ENCODE measurements at regions of chr11 and their contacts with region 1.

Region 1: GRCh38 chr11:102451681-102452460 is 694 bp downstream of the TMEM123 start:
- DNase-seq: peak; percentile 94
- H3K4me3 Mint-ChIP-seq: peak overlapping the region; percentile 95
- H3K27ac Mint-ChIP-seq: peak overlapping the region; percentile 99
- H3K4me1 Mint-ChIP-seq: peaks cover 70% of the 10 kb centered on the region
- H3K27me3 Mint-ChIP-seq: no peaks in the 10 kb centered on the region

Region 2: GRCh38 chr11:101765945-101766344 is 685.9 kb before region 1 on chr11:
- intact Hi-C with region 1: no loop called
- DNase-seq: no peak
- H3K4me3 Mint-ChIP-seq: no peak overlapping the region
- H3K27ac Mint-ChIP-seq: no peak overlapping the region
- H3K4me1 Mint-ChIP-seq: no peaks in the 10 kb centered on the region
- H3K27me3 Mint-ChIP-seq: no peaks in the 10 kb centered on the region

Region 3: DNA sequence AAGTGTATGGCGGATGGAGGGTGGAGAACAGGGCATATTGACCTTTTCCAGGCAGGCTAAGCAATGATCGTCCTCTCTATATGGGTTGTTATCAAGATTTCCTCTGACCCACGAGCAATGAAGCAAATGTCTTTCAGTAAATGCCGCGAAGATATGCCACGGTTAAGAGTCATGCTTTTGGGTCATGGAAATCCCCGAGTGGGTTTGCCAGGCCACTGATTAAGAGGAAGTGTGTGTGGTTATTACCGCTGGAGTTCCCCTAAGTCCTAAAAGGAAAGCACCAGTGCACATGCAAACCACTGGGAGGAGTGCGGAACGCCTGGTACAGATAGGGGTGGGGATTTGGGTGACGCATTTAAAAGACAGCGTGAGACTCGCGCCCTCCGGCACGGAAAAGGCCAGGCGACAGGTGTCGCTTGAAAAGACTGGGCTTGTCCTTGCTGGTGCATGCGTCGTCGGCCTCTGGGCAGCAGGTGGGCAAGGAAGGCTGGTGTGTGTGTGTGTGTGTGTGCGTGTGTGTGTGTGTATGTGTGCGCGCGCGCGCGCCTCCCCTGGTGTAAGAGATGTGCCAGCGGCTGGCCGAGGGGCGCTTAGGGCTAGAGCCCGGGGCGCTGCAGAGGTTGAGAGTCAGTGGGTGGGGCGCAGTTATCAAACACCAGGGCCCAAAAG is 134.6 kb before region 1 on chr11 and contains the start of gene BIRC3:
- intact Hi-C with region 1: loop called (anchors 1 kb)
- DNase-seq: peak; percentile 97
- H3K4me3 Mint-ChIP-seq: peak within 1 kb of the TSS; percentile 91
- H3K27ac Mint-ChIP-seq: peak within 1 kb of the TSS; percentile 93
- H3K4me1 Mint-ChIP-seq: peaks cover 64% of the 10 kb centered on the region
- H3K27me3 Mint-ChIP-seq: peaks cover 2% of the 10 kb centered on the region
- total RNA-seq, gene BIRC3: 100 and 102 TPM in 2 replicates

Region 4: DNA sequence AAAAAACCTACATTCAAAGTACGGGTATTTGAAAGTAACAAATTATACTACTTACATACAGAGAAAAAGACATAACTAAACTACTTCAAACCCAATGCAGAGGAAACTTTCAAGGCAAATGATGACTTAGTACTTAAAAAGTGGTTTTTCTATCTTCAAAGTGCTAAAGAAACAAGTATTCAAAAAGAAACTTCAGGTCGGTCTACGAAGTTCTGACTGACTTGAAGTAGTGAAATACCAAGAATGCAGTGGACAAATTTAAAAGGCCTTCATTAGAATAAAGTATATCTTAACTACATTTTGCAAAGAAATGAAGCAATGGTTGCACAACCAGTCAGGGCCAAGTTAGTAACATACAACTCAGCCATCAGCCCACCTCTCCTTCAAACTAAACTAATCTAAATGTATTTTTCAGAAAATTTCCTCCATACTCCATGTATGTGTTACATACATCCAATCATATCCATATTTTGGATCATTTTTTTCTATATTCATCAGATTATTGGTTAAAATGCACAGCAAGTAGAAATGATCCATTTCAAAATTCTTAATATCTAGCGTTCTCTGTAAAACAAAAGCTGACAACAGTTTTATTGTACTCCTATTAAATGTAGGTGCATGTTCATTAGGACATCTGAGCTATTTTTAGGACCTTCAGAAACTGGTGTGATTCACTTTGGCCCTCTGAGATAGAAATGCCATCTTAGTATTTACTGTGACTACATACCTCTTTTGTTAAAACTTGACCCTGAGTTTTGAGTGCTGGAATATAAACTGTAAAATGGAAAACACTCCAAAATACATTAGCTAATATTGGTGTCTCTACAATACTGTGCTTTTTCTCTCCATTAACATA is 54.9 kb before region 1 on chr11:
- intact Hi-C with region 1: loop called (anchors 2 kb)
- DNase-seq: no peak
- H3K4me3 Mint-ChIP-seq: no peak overlapping the region
- H3K27ac Mint-ChIP-seq: peak overlapping the region; percentile 69
- H3K4me1 Mint-ChIP-seq: peaks cover 32% of the 10 kb centered on the region
- H3K27me3 Mint-ChIP-seq: no peaks in the 10 kb centered on the region

Region 5: DNA sequence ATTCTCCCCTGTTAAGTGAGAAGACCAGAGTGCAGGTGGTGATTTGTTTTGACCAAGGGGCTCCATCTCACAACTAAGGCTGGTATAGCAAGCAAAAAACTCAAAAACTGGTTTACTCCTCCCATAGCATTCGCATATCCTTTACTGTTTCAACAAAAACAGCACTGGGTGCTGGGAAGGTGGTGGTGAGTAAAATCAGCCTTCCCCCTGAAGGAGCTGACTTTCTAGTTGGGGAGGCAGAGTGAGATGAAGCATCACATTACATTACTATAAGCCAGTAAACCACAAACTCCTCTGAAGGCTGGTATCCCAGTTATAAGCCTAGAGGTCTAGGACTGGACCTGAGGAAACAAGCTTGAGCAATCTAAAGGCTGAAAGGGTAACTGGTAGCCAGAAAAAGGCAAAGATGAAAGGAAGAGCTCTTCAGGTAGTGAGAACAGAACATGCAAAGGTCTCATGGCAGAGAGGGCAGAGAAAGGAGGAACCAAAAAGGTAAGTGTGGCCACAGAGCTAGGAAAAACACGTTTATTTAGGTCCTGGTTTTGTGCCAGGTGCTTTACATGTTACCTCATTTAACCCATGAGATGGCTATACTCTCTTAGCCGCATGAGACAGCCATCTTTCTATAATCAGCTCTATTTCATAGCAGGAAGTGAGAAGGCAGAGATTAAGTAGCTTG is 21.6 kb before region 1 on chr11:
- intact Hi-C with region 1: loop called (anchors 2 kb)
- DNase-seq: no peak
- H3K4me3 Mint-ChIP-seq: peak overlapping the region; percentile 38
- H3K27ac Mint-ChIP-seq: peak overlapping the region; percentile 87
- H3K4me1 Mint-ChIP-seq: peaks cover 52% of the 10 kb centered on the region
- H3K27me3 Mint-ChIP-seq: no peaks in the 10 kb centered on the region

Region 6: GRCh38 chr11:102495161-102496042 is 43.5 kb after region 1 on chr11:
- intact Hi-C with region 1: loop called (anchors 1 kb)
- DNase-seq: peak; percentile 86
- H3K4me3 Mint-ChIP-seq: no peak overlapping the region
- H3K27ac Mint-ChIP-seq: peak overlapping the region; percentile 24
- H3K4me1 Mint-ChIP-seq: peaks cover 27% of the 10 kb centered on the region
- H3K27me3 Mint-ChIP-seq: peaks cover 14% of the 10 kb centered on the region

Region 7: DNA sequence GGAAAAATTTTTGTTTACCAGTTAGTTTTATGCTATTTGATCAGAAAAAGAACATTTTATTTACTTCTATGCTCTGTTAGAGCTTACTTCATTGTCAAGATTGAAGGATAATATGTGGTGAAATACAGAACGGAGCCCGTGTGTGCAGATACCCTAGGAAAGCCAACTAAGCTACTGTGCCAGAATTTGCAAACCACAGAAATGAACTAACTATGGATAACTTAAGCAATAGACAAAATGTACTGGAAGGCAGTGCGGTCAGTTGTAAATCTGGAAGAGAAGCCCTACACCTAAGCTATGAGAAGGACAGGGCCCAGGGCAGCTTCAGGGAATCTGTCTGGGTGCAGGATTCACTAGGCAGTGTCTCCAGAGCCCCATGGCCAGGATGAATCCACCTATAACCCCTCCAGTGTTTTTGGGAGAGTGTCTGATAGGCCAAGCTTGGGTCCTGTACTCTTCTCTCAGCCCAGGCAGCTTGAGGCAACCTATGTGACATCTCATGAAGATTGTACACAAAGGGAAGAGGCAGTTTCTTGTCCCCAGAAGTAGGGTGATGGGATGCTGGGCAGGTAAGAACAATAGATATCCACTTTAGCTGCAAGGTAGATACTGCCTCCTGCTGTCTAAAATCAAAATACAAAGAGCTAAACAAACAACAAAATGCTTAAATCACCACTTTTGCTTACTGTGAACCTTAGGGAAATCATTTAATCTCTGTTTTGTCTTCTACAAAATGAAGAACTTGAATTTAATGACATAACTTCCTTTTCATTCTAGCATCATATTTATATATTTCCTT is 66.6 kb after region 1 on chr11:
- intact Hi-C with region 1: no loop called
- DNase-seq: no peak
- H3K4me3 Mint-ChIP-seq: no peak overlapping the region
- H3K27ac Mint-ChIP-seq: no peak overlapping the region
- H3K4me1 Mint-ChIP-seq: no peaks in the 10 kb centered on the region
- H3K27me3 Mint-ChIP-seq: peaks cover 20% of the 10 kb centered on the region

Region 8: DNA sequence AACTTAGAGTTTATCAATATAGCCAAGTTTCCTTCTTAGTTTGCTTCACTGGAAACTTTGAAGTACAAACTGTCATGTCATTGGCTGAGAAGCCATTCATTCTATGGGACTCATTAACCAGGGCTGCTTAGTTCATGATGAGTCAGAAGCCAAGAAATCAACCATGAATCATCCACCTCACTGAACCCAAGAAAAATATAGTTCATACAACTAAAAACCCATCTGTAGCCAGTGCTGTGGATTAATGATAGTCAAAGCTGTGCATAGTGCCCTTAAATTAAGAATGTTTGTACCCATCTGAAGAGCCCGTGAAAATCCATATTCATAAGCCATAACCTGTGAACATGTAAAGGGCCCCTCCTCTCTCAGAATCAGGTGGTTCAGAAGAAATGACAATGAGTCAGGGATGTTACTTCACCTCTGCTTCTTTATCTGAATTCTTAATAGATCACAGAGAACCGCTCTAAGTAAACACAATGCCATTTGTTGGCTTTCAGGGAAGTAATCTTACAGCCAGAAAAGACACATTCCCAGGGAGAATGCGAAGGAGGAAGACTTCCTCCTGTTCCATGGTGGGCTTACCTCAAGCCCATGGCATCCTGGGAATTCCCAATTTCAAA is 147.9 kb after region 1 on chr11:
- intact Hi-C with region 1: loop called (anchors 1 kb)
- DNase-seq: peak; percentile 62
- H3K4me3 Mint-ChIP-seq: peak overlapping the region; percentile 39
- H3K27ac Mint-ChIP-seq: peak overlapping the region; percentile 84
- H3K4me1 Mint-ChIP-seq: peaks cover 33% of the 10 kb centered on the region
- H3K27me3 Mint-ChIP-seq: no peaks in the 10 kb centered on the region